ENCODE measurements at regions of chr21 and their contacts with region 1.

Region 1: DNA sequence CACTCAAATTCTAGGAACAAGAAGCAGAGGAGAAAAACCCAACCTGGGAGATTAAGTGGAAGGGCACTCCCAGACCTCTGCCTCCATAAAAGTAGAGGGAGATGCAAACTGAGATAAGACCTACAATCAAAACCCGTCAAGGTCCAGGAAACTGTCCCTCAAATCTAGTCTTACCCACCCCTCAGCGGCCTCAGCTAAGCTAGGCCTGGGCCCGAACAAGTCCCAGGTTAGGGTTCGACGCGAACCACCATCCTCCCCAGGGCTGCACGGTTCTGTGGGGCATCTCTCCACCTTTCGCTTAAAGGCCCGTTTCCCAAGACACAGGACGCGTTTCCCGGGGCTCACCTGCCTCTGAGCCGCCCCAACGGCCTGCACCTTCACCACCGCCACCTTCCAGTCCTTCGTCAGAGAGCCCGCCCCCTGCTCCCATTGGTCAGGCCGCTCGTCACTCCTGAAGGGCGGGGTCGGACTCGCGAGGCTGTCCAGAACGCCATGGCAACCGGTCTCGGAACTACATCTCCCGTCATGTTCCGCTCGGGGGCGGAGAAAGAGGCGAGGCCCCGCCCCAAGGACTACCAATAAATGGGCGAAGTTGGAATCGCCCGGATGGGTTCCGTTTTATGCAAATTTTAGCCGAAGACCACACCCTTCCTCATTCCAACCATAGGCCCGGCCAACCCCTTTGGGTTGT is at the start of gene CRYZL1:
- DNase-seq: peak; percentile 100
- ATAC-seq: peak; percentile 78 to 92 (median 81)
- H3K4me3 ChIP-seq: peak within 1 kb of the TSS; percentile 71
- H3K4me3 Mint-ChIP-seq: peak within 1 kb of the TSS; percentile 88
- H3K27ac ChIP-seq: peak within 1 kb of the TSS; percentile 83
- H3K27ac Mint-ChIP-seq: peak within 1 kb of the TSS; percentile 86 to 90
- H3K4me1 ChIP-seq: peaks cover 16% of the 10 kb centered on the region
- H3K4me1 Mint-ChIP-seq: peaks cover 29% of the 10 kb centered on the region in 2 donors
- H3K27me3 ChIP-seq: peaks cover 7% of the 10 kb centered on the region
- H3K27me3 Mint-ChIP-seq: peaks cover 17 to 23% of the 10 kb centered on the region in 2 donors
- CTCF ChIP-seq: no peak
- total RNA-seq, gene CRYZL1: 25.8 to 32.8 (median 30.0) TPM

Region 2: GRCh38 chr21:32727687-32728455 is 913.6 kb before region 1 on chr21 and contains the start of gene SYNJ1:
- intact Hi-C with region 1: loop called (anchors 5 kb)
- DNase-seq: peak; percentile 95 to 96
- ATAC-seq: peak; percentile 88 to 97 (median 92)
- H3K4me3 ChIP-seq: peak within 1 kb of the TSS; percentile 92
- H3K4me3 Mint-ChIP-seq: peak within 1 kb of the TSS; percentile 95
- H3K27ac ChIP-seq: peak within 1 kb of the TSS; percentile 78
- H3K27ac Mint-ChIP-seq: peak within 1 kb of the TSS; percentile 85 to 96
- H3K4me1 ChIP-seq: peaks cover 6% of the 10 kb centered on the region
- H3K4me1 Mint-ChIP-seq: peaks cover 31 to 32% of the 10 kb centered on the region in 2 donors
- H3K27me3 ChIP-seq: no peaks in the 10 kb centered on the region
- H3K27me3 Mint-ChIP-seq: no peaks in the 10 kb centered on the region
- CTCF ChIP-seq: no peak
- total RNA-seq, gene SYNJ1: 16.2 to 22.4 (median 20.1) TPM

Region 3: GRCh38 chr21:33491373-33492102 is 149.9 kb before region 1 on chr21 and contains the start of gene DNAJC28:
- intact Hi-C with region 1: loop called (anchors 1 kb)
- DNase-seq: peak; percentile 94 to 97
- ATAC-seq: peak; percentile 98
- H3K4me3 ChIP-seq: peak within 1 kb of the TSS; percentile 78
- H3K4me3 Mint-ChIP-seq: peak within 1 kb of the TSS; percentile 89
- H3K27ac ChIP-seq: peak within 1 kb of the TSS; percentile 34
- H3K27ac Mint-ChIP-seq: peak within 1 kb of the TSS; percentile 82 to 86
- H3K4me1 ChIP-seq: peaks cover 8% of the 10 kb centered on the region
- H3K4me1 Mint-ChIP-seq: peaks cover 14% of the 10 kb centered on the region in 2 donors
- H3K27me3 ChIP-seq: no peaks in the 10 kb centered on the region
- H3K27me3 Mint-ChIP-seq: peaks cover 7 to 10% of the 10 kb centered on the region in 2 donors
- CTCF ChIP-seq: no peak
- total RNA-seq, gene DNAJC28: 0.41 to 0.63 TPM in 2 of 3 donors, not detected in the other

Region 4: GRCh38 chr21:33588485-33589335 is 52.8 kb before region 1 on chr21 and contains the start of gene DONSON:
- intact Hi-C with region 1: loop called (anchors 1 kb)
- DNase-seq: peak; percentile 92 to 93
- ATAC-seq: peak; percentile 94 to 98 (median 95)
- H3K4me3 ChIP-seq: peak within 1 kb of the TSS; percentile 76
- H3K4me3 Mint-ChIP-seq: peak within 1 kb of the TSS; percentile 92
- H3K27ac ChIP-seq: peak within 1 kb of the TSS; percentile 64
- H3K27ac Mint-ChIP-seq: peak within 1 kb of the TSS; percentile 75 to 87
- H3K4me1 ChIP-seq: peaks cover 10% of the 10 kb centered on the region
- H3K4me1 Mint-ChIP-seq: peaks cover 15 to 17% of the 10 kb centered on the region in 2 donors
- H3K27me3 ChIP-seq: no peaks in the 10 kb centered on the region
- H3K27me3 Mint-ChIP-seq: no peaks in the 10 kb centered on the region
- CTCF ChIP-seq: peak; percentile 22
- total RNA-seq, gene DONSON: 17.0 to 18.3 (median 17.3) TPM

Region 5: GRCh38 chr21:34614633-34615486 is 973.4 kb after region 1 on chr21 and contains the start of gene RCAN1:
- intact Hi-C with region 1: loop called (anchors 5 kb)
- DNase-seq: peak; percentile 78 to 94
- ATAC-seq: peak; percentile 95 to 99 (median 97)
- H3K4me3 ChIP-seq: peak within 1 kb of the TSS; percentile 38
- H3K4me3 Mint-ChIP-seq: peak within 1 kb of the TSS; percentile 93
- H3K27ac ChIP-seq: peak within 1 kb of the TSS; percentile 71
- H3K27ac Mint-ChIP-seq: peak within 1 kb of the TSS; percentile 91 to 94
- H3K4me1 ChIP-seq: peaks cover 10% of the 10 kb centered on the region
- H3K4me1 Mint-ChIP-seq: peaks cover 28 to 30% of the 10 kb centered on the region in 2 donors
- H3K27me3 ChIP-seq: no peaks in the 10 kb centered on the region
- H3K27me3 Mint-ChIP-seq: peaks cover 0 to 6% of the 10 kb centered on the region in 2 donors
- CTCF ChIP-seq: no peak
- total RNA-seq, gene RCAN1: 6.7 to 8.9 (median 8.2) TPM

Measured in natural killer cell (primary cell).